ENCODE measurements at regions of chr9 and their contacts with region 1.

Region 1: GRCh38 chr9:133406480-133407307 is 11.1 kb downstream of the REXO4 start:
- DNase-seq: no peak
- H3K4me3 ChIP-seq: no peak overlapping the region
- CTCF ChIP-seq: peak; percentile 96

Region 2: DNA sequence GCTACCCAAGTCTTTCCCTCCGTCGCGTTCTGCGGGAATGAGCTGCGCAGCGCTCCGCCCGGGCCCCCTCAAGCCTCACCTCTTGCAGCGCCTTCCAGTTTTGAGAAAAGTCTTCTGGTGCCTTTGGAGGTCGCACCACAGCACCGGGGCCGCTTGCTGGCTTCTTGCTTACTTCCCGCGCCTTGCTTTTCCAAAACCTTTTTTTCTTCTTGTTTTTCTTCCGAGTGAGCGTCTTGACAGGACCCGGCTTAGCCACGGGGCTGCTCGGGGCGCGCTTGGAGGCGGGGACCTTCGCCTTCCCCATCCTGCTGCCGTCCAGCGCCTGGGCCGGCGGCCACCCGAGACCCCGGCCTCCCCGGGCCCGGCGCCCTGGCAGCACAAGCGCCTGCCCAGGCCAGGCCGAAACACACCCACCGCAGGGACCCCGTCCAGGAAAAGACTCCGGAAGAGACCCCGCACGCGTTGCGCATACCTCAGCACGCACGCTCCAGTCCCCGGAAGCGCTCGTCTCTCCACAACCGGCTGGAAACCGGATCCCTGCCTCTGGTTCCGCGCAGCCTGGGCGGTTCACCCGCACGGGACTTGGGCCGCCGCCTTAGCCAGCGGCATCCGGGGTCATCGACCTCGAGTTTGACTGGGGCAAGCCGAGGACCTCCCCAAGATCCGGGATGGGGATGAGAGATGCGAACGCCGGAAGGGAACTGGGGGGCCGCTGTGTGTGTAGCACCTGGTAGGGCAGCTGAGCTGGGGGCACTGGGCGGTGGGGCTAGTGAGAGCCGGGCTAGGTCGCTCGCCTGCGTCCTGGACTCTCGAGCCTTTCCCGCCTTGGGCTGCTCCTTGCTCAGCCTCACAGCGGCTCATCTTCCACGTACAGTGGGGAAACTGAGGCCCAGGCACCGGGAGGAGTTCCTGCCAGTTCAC is 11.1 kb after region 1 on chr9 and contains the start of gene REXO4:
- CTCF ChIA-PET with region 1: interaction called, 31 read pairs
- POLR2A ChIA-PET with region 1: no interaction called
- DNase-seq: peak; percentile 24
- H3K4me3 ChIP-seq: peak within 1 kb of the TSS; percentile 86
- CTCF ChIP-seq: no peak